ENCODE measurements at regions of chr19 and their contacts with region 1.

Region 1: DNA sequence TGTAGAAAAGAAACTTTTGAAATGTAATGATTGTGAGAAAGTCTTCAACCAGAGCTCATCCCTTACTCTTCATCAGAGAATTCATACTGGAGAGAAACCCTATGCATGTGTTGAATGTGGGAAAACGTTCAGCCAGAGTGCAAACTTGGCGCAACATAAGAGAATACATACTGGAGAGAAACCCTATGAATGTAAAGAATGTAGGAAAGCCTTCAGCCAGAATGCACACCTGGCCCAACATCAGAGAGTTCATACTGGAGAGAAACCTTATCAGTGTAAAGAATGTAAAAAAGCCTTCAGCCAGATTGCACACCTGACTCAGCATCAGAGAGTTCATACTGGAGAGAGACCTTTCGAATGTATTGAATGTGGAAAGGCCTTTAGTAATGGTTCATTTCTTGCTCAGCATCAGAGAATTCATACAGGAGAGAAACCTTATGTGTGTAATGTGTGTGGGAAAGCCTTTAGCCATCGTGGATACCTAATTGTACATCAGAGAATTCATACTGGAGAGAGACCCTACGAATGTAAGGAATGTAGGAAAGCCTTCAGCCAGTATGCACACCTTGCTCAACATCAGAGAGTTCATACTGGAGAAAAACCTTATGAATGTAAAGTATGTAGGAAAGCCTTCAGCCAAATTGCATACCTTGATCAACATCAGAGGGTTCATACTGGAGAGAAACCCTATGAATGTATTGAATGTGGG is 19.3 kb downstream of the ZNF583 start:
- DNase-seq: no peak
- ATAC-seq: no peak

Region 2: DNA sequence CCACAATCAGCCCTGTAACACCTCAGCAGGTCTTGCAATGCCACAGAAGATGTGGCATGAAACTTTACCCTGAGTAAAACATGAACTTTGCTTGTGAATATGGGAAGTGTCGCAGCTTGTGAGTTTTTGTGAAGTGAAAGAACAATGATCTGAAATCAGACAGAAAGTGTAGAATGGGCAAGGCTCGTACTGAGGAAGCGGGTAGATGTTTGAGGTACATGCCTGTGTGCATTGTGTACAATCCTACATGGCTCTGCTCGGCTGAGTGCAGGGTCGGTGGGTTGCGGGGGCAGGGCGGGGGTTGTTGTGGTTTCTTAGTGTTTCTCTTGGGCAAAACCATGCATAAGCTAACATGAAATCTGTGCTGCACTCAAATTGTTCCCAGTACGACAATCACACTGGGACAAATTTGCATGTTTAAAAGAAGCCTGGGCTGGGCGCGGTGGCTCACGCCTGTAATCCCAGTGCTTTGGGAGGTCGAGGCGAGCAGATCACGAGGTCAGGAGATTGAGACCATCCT is 492.4 kb before region 1 on chr19:
- intact Hi-C with region 1: no loop called
- DNase-seq: no peak
- ATAC-seq: no peak

Region 3: DNA sequence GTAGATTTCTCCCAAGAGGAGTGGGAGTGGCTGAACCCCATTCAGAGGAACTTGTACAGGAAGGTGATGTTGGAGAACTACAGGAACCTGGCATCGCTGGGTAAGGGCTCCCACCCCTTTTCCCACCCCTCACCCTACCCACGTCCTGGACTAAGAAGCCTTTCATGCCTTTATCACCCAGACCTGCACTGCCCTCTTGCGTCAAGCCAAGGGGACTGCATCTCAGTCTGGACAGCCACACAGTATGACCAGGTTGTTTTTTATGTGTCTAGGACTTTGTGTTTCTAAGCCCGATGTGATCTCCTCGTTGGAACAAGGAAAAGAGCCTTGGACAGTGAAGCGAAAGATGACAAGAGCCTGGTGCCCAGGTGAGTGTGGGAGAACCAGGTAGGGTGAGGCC is 124.1 kb after region 1 on chr19:
- intact Hi-C with region 1: loop called (anchors 10 kb)
- DNase-seq: no peak
- ATAC-seq: no peak

Measured in Right ventricle myocardium superior (tissue), 1 donor.